K562 (cell line): ENCODE measurements at regions of chr17 and their contacts with region 1.

Region 1: GRCh38 chr17:68435876-68436842 is 21.1 kb downstream of the WIPI1 start:
- DNase-seq: peak; percentile 69 to 87 (median 72)
- ATAC-seq: peak; percentile 79
- H3K4me3 ChIP-seq: no peak overlapping the region
- H3K27ac ChIP-seq: no peak overlapping the region; the same call in 2 of the 3 replicates
- H3K4me1 ChIP-seq: peaks cover 17 to 28% of the 10 kb centered on the region in 2 experiments
- H3K27me3 ChIP-seq: no peaks in the 10 kb centered on the region
- CTCF ChIP-seq: peak; percentile 79 to 93 (median 91)
- EP300 ChIP-seq: 0 out of 2 replicates have a peak, but pooled peaks have one; percentile 6
- POLR2A ChIP-seq: no peak
- RAD21 ChIP-seq: peak; percentile 66 to 76

Region 2: GRCh38 chr17:68277807-68278206 is 158.4 kb before region 1 on chr17:
- CTCF ChIA-PET with region 1: no interaction called
- POLR2A ChIA-PET with region 1: no interaction called
- in situ Hi-C with region 1: no loop called
- intact Hi-C with region 1: no loop called
- DNase-seq: no peak
- ATAC-seq: no peak
- H3K4me3 ChIP-seq: no peak overlapping the region
- H3K27ac ChIP-seq: no peak overlapping the region
- H3K4me1 ChIP-seq: no peaks in the 10 kb centered on the region
- H3K27me3 ChIP-seq: peaks cover 2 to 18% of the 10 kb centered on the region in 2 experiments; a peak in 4 of 5 replicates
- CTCF ChIP-seq: no peak
- EP300 ChIP-seq: no peak
- POLR2A ChIP-seq: no peak
- RAD21 ChIP-seq: no peak

Region 3: DNA sequence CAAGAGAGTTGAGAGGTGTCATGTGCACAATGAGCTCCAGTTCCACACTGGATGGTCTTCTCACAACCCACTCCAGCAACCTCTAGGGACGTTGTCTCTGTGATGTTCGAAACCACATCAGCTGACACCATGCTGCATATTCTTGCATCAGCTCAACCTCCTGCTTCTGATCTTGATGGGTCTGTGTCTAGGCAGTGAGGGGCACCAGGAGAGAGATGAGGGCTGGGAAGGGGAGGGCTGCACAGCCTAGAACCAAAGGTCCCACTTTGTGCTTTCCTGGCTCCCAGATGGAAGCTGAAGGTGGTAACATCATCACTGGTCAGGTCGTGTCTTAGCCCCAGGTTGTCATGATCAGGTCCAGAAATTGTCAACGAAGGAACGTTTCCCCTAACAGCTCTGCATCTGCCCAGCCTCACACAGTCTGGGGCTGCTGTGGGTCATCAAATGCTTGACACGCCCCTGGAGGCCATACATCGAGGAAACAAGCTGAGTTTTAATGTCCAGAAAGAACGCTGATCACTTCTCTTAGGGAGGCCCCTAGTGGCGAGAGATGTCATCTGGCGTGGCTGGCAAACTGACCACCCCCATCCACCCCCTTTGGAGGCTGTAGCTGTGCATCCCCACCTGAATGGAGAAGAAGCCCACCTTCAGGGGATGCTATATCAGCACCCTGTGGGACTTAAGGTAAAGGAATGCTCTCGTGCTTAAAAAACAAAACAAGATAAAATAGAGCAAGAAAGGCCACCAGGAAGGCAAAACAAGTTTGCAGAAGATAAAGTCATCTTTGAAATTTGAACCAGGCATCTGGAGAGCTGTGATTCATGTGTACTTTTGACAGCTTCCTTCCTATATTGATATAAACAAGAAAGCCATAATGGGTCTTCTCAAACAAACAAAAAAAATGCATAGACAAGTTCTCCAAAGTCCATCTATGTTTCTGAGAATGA is 37.2 kb before region 1 on chr17:
- CTCF ChIA-PET with region 1: interaction called, 3 read pairs
- POLR2A ChIA-PET with region 1: no interaction called
- in situ Hi-C with region 1: no loop called
- intact Hi-C with region 1: loop called (anchors 1 kb)
- DNase-seq: peak; percentile 68 to 77 (median 76)
- ATAC-seq: peak; percentile 98
- H3K4me3 ChIP-seq: no peak overlapping the region
- H3K27ac ChIP-seq: no peak overlapping the region
- H3K4me1 ChIP-seq: 0 out of 5 replicates have a peak, but pooled peaks cover 0 to 4% of the 10 kb centered on the region in 2 experiments
- H3K27me3 ChIP-seq: peaks cover 17 to 44% of the 10 kb centered on the region in 2 experiments; a peak in 3 of 5 replicates
- CTCF ChIP-seq: peak; percentile 85 to 89 (median 87)
- EP300 ChIP-seq: no peak
- POLR2A ChIP-seq: no peak
- RAD21 ChIP-seq: peak; percentile 78 to 80

Region 4: GRCh38 chr17:68539548-68540467 is 103.6 kb after region 1 on chr17:
- CTCF ChIA-PET with region 1: no interaction called
- POLR2A ChIA-PET with region 1: no interaction called
- in situ Hi-C with region 1: no loop called
- intact Hi-C with region 1: no loop called
- DNase-seq: peak in 1 of 4 experiments; percentile 22
- ATAC-seq: peak; percentile 61; the same call in 2 of the 3 replicates
- H3K4me3 ChIP-seq: no peak overlapping the region
- H3K27ac ChIP-seq: no peak overlapping the region
- H3K4me1 ChIP-seq: no peaks in the 10 kb centered on the region
- H3K27me3 ChIP-seq: peaks cover 7 to 20% of the 10 kb centered on the region in 2 experiments
- CTCF ChIP-seq: peak in 2 of 3 experiments; percentile 35 to 46; a peak in 4 of 6 replicates
- EP300 ChIP-seq: no peak
- POLR2A ChIP-seq: no peak
- RAD21 ChIP-seq: peak; percentile 7 to 35; a peak in 2 of 4 replicates